AG04449 (cell line): ENCODE measurements at regions of chr12 and their contacts with region 1.

Region 1: GRCh38 chr12:54379401-54380201 is 4.9 kb downstream of the ZNF385A start:
- DNase-seq: no peak
- H3K4me3 ChIP-seq: peak overlapping the region; percentile 58
- CTCF ChIP-seq: peak; percentile 100

Region 2: DNA sequence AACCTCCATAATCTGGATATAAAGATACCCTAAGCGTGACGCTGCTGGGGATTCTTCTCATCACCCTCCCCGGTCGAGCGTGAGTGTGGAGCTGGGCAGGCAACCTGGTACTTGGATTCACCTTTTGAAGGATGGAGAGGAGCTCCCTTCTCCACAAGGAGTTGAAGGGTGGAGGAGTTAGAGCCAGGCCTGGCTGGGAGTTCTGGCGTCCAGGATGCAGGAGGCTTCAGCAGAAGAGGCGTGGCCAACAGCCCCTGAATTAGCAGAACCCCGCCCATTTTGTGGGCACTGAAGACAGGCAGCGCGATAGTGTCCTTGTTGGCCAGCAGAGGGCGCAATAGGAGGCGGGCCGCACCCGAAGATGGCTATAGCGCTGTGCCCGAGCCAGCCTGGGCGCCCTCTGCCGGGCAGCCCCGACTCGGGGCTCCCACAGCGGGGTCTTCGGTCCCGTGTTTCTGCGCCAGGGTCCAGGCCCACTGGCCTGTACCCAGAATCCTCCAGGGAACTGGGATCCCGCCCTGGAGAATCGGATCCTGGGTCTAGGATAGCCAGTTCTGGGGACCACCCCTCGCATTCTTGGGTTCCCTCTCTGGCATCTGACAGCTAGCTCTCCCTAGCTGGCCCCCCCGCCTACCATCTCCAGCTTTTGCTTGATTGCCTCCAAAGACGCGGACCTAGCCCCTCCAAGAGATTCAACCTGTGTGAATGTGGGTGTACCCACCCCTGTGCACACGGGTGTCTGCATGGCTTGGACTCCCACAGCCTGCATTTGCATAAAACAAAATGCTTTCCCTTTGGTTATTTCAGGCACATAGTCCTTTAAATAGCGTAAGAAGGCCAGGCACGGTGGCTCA is 164.8 kb before region 1 on chr12:
- CTCF ChIA-PET with region 1: interaction called, 66 read pairs
- POLR2A ChIA-PET with region 1: no interaction called
- DNase-seq: no peak
- H3K4me3 ChIP-seq: peak overlapping the region; percentile 36
- CTCF ChIP-seq: peak; percentile 99

Region 3: GRCh38 chr12:54259194-54260011 is 120.2 kb before region 1 on chr12:
- CTCF ChIA-PET with region 1: interaction called, 21 read pairs
- POLR2A ChIA-PET with region 1: no interaction called
- DNase-seq: no peak
- H3K4me3 ChIP-seq: peak overlapping the region; percentile 2
- CTCF ChIP-seq: no peak

Region 4: DNA sequence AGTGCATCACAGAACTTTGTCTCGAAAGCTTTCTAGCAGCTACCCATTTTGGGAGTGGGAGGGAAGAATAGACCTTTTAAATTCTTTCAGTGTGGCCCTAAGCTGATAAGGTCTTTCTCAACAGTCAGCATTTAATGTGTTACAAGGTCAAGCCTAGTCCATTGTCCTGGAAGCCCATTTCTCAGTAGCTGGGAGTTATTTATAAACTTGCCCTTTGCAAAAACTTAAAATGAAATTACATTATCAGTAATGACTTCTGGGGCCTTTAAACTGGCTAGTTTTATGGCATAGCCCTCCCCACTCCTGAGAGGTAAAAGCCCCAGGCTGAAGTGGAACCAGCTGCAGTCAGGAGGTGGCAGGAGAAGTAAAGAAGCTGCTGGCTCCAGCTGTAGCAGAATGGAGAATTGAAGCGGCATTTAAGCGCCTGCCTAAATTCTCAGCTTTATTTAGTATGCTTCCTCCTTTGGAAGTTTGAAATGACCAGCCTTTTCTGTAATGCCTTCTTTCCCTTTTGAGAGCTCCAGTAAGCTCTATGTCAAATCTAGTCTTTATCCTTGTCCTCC is 42.2 kb before region 1 on chr12:
- CTCF ChIA-PET with region 1: interaction called, 52 read pairs
- POLR2A ChIA-PET with region 1: no interaction called
- DNase-seq: no peak
- H3K4me3 ChIP-seq: no peak overlapping the region
- CTCF ChIP-seq: no peak

Region 5: DNA sequence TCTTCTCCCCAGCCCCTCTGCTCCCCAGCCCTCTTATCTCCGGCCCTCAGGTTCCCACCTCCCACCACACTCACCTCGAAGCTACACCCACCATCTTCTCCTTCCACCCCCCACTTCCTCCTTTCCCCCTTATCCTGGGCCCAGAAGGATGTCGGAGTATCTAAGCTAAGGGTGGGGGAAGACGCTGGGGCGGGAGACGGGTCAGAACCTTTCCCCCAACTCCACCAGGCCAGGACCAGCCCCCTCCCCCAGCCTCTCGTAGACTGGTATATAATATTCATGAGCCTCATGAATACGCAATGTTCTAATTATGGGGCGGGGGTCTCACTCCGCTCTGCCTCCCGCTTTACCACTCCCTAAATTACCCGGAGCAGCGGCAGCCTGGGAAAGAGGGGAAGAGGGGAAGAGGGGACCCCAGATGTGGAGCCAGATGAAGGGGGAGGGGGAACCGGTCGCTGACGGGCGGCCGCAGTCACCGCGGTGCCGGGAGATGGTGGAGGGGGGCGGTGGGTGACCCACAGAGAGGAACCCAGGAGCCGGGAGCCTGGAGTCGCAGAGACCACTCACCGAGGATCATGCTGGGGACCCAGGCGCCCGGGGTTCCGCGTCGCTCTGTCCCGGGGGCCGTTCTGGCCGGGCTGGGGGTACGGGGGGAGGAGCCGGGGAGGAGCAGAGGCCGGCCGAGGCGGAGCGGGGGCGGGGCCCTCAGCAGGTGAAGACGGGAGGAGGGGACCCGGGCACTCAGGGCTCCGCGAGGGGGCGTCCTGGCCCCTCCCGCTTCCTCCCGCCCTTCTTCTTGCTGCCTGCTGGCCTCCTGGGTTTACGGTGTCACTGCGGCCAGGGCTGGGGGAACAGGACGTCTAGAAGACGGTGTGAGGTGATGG is 11.3 kb after region 1 on chr12:
- CTCF ChIA-PET with region 1: interaction called, 333 read pairs
- POLR2A ChIA-PET with region 1: interaction called, 3 read pairs
- DNase-seq: no peak
- H3K4me3 ChIP-seq: no peak overlapping the region
- CTCF ChIP-seq: no peak

Region 6: DNA sequence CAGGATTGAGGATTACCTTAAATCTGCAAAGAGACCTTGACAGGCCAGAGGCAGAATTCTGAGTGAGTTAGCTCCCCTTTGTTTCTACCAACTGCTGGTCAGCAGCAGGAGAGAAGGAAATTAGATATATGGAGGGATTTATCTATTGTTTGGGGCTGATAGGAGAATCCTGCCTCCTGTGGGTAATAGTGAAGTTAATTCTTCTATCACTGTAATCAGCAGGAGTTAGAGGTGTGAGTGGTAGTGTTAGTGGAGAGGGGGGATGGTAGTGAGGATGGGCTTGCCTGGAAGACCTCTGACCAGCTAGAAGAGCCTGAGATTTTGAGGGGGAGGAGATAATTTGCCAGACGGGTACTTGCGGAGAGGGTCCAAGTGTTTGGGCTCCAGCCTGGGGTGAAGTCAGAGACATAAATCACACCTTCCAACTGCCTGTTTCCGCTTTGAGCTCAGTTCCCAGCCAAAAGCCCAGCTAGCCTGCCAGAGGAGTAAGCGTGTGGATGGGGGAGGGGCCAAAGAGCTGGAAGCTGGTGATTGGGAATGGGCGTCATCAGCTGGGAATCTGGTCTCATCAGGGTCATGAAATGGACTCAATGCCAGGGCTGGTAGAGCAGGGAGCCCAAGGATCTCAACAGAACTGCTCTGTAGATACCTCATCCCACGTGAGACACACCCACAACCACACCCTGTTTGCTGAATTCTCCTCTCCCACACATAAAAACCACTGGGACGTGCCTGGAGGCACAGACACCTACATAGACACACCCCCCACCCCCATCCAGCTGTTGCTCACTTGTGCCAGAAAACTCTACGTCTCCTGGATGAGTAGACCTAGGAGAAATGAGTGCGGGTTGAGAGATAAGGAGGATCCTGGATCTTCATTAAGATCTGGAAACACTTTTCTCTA is 52.6 kb after region 1 on chr12:
- CTCF ChIA-PET with region 1: interaction called, 152 read pairs
- POLR2A ChIA-PET with region 1: no interaction called
- DNase-seq: no peak
- H3K4me3 ChIP-seq: no peak overlapping the region
- CTCF ChIP-seq: no peak

Region 7: GRCh38 chr12:54853995-54854566 is 474.5 kb after region 1 on chr12 and contains the start of gene MUCL1:
- CTCF ChIA-PET with region 1: no interaction called
- POLR2A ChIA-PET with region 1: no interaction called
- DNase-seq: no peak
- H3K4me3 ChIP-seq: no peak within 1 kb of the TSS
- CTCF ChIP-seq: peak; percentile 78